ENCODE measurements at regions of chr2 and their contacts with region 1.

Region 1: DNA sequence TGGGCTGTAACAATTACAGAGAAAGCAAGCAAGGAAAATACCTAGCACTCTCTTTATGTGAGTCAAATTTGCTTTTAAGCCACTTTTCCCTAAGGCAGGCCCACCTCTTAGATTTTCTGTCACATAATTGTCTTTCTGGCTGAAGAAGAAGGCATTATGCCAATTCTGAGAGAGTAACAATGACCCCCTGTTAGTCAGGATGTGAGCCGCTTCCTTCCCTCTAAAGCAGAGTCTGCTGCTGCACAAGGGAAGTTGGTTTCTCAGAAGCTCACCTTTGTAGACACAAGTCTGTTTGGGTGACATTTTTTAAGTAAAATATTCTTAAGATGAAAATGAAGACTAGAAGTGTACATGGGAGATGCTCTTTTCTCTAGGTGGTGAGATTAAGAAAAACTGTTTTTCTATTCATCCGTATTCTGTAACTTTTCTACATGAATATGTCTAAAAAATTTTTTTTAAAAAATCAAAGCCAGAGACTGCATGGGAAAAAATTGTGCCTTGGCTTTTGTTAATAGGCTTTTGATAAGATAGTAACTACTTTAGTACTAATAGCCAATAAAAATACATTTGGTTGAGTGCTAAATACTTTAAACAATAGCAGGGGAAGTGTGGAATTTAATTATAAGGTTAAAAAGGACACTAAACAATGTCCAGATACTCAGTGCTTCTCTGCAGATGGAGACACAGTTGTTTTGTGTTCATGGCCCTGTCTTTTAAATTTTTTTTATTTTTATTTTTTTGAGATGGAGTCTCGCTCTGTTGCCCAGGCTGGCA is 33.4 kb upstream of the VPS54 start:
- DNase-seq: no peak
- ATAC-seq: peak; percentile 44 to 69

Region 2: GRCh38 chr2:64137567-64137966 is 84.9 kb after region 1 on chr2:
- intact Hi-C with region 1: loop called in 1 of 2 experiments (anchors 5 kb)
- DNase-seq: no peak
- ATAC-seq: no peak

Region 3: DNA sequence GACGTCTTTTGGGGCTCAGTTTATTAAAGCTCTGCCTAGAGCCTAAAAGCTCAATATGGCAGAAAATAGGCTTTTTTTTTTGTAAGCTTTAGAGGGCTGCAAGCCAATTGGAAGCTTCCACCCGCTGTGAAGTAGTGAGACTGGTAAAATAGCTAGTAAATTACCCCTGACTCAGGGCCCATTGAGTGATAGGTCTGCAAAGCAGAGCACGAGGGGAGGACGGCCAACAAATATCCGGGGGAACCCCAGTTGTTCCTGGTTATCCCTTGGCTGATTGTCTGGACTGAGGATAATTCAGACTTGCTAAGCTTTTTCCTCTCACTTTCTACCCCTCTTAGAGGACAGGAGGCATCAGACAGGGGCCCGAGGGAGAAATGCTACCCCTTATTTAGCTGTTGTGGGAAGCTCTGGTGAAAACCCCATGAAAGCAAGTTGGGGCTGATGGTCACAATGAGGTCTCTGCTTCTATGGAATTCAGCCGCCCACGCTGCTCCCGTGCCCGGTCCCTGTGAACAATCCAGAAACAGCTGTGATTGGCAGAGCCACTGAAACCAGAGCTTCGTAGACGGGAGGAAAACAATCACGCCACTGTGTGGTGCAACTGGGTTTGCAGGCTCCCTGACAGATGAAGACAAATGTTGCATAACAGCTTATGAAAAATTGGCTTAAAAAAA is 259.4 kb after region 1 on chr2:
- intact Hi-C with region 1: loop called in 1 of 2 experiments (anchors 1 kb)
- DNase-seq: peak; percentile 89
- ATAC-seq: peak; percentile 94 to 96

Region 4: DNA sequence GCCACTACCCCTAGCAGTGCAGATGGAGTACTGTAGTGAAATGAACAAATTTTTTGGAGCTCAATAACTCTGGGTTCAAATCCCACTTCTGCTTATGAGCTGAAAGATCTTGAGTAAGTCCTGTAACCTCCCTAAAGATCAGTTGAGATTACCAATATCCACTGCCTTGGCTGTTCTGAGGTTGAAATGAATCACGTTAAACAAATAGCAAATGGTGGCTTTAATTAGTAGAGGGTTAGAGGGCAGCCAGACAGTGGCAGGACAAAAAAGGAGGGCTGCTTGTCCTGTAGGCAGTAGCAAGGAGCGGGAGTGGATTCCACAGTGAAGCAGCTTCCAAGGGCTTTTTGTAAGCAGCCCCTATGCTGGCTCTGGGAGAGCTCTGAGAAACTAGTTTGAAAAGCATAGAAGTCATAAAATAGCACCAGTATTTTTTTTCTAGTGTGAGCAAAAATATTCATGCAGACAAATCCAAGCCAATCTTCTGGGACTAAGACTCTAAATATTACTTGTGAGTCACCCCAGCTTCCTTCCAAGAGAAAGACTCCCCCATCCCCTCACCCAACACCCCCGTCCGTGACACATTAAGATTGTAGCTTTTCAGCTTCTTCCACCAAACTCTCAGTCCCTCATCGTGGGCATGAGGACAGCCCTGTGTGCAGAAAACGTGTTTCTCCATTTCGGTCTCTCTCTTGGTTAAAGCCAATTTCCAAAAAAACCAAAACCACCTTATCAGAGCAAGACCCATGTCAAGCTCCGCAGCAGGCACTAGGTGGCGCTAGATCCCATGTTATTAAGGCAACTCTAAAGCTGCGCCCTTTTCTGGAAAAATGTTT is 277.8 kb after region 1 on chr2:
- intact Hi-C with region 1: loop called (anchors 2 to 5 kb)
- DNase-seq: peak; percentile 78
- ATAC-seq: peak; percentile 73 to 79

Region 5: DNA sequence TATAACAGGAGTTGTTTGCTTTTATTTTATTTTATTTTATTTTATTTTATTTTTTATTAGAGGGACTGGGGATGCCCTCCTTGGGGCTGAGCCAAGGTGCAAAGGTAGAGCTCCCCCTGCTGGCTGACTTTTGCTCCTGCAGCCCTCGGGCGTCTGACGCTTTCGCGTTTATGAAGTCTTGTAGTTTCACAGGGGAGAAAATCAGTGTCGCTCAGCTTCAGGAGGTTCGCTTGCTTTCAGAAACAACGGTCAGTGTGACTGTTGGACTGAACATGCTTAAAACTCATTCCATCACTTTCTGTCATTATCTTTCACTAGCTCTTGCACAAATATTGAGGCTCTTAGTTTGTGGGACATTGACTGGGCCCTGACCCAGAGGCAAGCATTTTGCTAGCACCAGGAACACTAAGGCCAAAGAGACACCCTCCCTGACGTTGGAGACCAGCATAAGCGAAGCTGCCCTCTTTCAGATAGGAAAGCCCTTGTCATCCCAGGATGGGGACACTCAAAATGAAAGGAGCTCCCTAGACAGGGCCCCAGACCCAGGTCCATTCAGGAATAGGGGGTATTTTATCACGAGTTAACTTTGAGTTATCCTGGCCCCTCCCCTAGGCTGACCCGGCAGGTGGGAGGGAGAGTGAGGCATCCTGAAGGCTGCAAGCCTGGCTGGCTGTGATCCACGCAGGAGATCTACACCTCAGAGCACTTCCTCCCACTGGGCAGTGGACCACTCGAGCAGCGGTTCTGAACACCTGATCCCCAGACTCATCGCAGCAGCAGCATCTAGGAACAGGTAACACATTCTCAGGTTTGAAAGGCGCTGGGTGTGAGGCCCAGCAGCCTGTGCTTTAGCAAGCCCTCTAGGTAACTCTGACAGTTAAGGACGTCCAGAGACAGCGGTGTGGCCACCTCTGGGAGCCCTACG is 435.7 kb after region 1 on chr2:
- intact Hi-C with region 1: loop called (anchors 10 kb)
- DNase-seq: peak; percentile 67
- ATAC-seq: peak; percentile 68 to 77

Region 6: DNA sequence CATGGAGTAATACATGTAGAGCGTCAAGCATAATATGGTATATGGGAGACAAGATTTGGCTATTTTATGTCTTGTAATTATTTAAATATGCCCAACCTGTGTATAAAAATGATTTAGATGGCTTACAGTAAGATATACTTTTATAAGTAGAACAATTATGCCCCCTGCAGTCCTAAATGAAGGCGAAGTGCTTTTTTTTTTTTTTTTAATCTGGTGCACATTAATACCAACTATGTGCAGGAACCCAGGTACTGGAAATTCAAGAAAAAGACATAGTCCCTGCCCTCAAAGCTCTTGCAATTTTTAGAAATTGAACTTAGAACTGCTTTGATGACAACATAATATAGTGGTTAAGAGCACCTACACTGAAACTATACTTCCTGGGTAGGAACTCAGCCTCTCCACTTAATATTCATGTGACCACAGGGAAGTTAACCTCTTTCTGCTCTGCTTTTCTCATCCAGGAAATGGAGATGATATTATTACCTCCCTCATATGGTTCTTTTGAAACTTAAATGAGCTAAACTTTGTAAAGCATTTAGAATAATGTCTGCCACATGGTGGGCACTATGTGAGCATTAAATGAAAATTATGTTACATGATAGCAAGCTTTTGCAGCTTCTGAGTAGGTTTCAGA is 509.6 kb after region 1 on chr2:
- intact Hi-C with region 1: loop called in 1 of 2 experiments (anchors 5 kb)
- DNase-seq: no peak
- ATAC-seq: no peak